Activated naive CD4-positive, alpha-beta T cell treated with anti-CD3 and anti-CD28 coated beads for 36 hours (primary cell): ENCODE measurements at regions of chr10 and their contacts with region 1.

Region 1: DNA sequence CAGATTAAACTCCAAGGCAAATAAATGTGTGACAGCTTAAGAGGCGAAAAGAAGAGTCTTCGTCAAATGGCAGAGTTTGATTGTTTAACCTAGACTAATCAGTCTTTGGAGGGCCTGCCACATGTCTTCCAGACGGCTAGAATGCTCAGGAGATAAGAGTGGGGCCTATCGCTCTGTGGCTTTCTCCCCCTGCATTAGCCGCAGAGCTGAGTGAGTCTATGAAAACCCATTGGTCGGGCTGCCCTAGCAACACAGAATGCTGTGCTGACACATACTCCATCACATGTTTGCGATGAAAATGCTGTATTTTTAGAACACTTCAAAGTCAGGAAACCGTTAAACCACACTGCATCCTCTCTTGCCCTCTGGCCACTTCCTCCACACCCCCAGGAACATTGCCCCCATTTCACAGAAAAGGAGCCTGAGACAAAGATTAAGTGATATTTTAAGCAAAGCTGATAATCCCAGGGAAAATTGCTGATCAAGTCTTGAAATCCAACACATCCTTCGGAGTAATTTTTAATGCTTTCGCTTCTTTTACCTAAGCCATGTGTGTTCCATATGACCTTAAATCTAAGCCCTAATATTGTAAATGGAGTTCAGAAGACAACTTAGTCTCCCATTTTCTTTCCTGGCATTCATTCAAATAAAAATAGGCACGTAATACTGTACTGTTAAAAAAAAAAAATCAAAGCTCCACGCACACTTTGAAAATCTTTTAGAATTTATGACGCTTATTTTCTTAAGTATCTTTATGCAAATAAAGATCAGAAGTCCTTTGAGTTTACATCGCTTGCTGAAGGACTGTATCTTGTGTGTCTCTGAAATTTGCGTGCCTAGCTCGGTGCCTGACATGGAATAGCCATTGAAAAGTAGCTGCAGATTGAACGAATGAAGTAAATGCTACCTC is 161.2 kb downstream of the CELF2 start:
- DNase-seq: peak; percentile 90
- H3K4me3 Mint-ChIP-seq: peak overlapping the region; percentile 82
- H3K27ac Mint-ChIP-seq: no peak overlapping the region
- H3K4me1 Mint-ChIP-seq: peaks cover 88% of the 10 kb centered on the region
- H3K27me3 Mint-ChIP-seq: no peaks in the 10 kb centered on the region

Region 2: GRCh38 chr10:10930979-10931743 is 247.7 kb before region 1 on chr10:
- CTCF ChIA-PET with region 1: no interaction called
- intact Hi-C with region 1: no loop called
- DNase-seq: no peak
- H3K4me3 Mint-ChIP-seq: no peak overlapping the region
- H3K27ac Mint-ChIP-seq: no peak overlapping the region
- H3K4me1 Mint-ChIP-seq: no peaks in the 10 kb centered on the region
- H3K27me3 Mint-ChIP-seq: no peaks in the 10 kb centered on the region

Region 3: GRCh38 chr10:11113156-11113555 is 65.7 kb before region 1 on chr10:
- CTCF ChIA-PET with region 1: interaction called, 7 read pairs
- intact Hi-C with region 1: loop called (anchors 1 kb)
- DNase-seq: peak; percentile 41
- H3K4me3 Mint-ChIP-seq: no peak overlapping the region
- H3K27ac Mint-ChIP-seq: no peak overlapping the region
- H3K4me1 Mint-ChIP-seq: peaks cover 21% of the 10 kb centered on the region
- H3K27me3 Mint-ChIP-seq: no peaks in the 10 kb centered on the region

Region 4: DNA sequence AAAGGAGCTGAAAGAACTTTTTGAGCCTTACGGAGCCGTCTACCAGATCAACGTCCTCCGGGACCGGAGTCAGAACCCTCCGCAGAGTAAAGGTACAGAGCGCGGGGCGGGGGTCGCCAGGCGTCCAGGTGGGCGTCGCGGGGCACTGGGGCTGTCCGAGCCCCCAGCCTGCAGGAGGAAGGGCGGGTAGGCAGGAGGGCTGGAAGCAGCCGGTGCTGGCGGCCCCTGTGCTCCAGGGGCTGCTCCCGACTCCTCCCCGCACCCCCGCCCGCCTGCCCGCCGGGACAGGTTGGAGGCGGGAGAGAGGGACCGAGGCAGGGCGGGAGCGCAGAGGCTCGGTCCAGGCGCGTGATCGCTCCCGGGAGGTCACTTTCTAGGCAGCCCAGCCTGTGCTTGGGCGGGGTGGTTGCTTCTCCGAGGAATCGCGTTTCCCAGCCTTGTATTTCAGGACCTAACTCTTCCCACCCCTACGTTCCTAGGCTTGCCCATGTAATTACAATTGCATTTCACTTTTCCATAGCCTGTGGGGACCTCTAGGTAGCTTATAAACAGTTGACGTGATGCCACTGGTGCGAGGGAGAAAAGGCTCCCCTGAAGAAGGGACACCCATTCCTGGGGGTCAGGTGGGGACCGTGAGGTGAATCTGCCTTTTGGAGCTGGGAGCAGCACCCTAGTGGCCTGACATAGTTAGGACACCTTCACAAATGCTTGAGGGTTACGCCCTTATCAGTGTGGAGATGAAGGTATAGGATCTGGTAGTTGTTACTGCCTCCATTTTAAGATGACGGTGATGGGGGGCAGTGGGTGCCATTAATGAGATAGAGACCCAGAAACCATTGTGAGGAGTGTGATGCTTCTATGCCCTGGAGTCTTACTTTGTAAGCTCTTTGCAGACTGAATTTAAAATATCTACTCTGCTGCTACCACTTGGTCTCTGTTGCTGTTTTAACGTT is 13.0 kb before region 1 on chr10:
- CTCF ChIA-PET with region 1: interaction called, 11 read pairs
- intact Hi-C with region 1: loop called (anchors 1 kb)
- DNase-seq: peak; percentile 84
- H3K4me3 Mint-ChIP-seq: no peak overlapping the region
- H3K27ac Mint-ChIP-seq: no peak overlapping the region
- H3K4me1 Mint-ChIP-seq: peaks cover 26% of the 10 kb centered on the region
- H3K27me3 Mint-ChIP-seq: no peaks in the 10 kb centered on the region

Region 5: DNA sequence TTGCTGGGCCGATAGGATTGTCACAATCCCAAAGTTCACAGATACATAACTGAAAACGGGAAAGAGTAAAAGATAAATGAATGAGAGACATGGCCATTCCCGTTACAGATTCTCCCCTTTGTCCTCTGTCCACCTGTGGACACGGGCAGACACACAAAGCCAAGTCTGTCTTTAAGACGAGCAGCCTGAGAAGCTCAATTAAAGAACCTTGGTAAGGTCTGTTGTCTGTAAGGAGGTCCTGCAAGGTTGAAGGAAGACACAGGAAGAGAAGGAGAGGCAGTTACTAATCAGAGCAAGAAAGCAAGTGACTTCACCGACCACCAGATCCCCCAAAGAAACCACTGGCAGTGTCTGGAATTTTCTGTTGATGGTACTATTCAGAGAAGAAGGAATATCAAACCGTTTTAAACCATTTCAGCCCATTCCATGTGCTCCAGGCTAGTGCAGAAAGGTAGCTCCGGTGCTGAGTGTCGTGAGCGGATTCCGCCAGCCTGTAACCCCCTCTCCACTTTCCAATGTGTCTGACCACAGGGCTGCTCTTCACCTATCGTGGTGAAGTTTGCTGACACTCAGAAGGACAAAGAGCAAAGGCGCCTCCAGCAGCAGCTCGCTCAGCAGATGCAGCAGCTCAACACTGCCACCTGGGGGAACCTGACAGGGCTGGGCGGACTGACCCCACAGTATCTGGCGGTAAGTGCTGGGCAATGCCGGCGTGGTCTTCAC is 91.4 kb after region 1 on chr10:
- CTCF ChIA-PET with region 1: interaction called, 13 read pairs
- intact Hi-C with region 1: loop called (anchors 1 kb)
- DNase-seq: peak; percentile 85
- H3K4me3 Mint-ChIP-seq: no peak overlapping the region
- H3K27ac Mint-ChIP-seq: peak overlapping the region; percentile 52
- H3K4me1 Mint-ChIP-seq: peaks cover 77% of the 10 kb centered on the region
- H3K27me3 Mint-ChIP-seq: no peaks in the 10 kb centered on the region

Region 6: DNA sequence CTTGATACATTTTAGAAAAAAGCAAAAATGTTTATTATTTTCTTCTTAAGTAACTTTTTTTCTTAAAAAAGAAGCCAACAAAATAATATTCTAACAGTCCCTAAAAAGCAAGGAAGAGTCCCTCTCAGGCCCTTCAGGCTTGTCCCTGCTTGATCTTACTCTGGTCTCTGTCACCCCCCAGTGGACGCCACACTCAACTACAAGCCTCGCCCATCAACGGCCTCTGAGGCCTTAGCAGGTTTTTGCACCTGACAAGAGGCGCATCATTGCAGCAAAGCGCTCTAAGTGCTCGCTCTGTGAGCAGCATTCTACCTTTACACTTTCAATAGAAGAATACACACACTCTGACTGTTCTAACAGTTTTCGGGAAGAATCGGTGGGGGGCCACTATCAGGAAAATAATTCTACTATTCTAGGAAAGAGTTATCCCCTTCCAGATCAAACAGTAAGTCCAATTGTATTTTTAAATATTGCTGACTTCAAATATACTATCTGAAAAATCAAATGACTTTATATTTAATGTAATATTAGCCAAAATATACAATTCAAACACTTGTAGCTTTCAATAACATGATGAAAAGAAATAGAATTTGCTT is 293.4 kb after region 1 on chr10:
- CTCF ChIA-PET with region 1: no interaction called
- intact Hi-C with region 1: loop called (anchors 2 kb)
- DNase-seq: peak; percentile 85
- H3K4me3 Mint-ChIP-seq: no peak overlapping the region
- H3K27ac Mint-ChIP-seq: no peak overlapping the region
- H3K4me1 Mint-ChIP-seq: no peaks in the 10 kb centered on the region
- H3K27me3 Mint-ChIP-seq: no peaks in the 10 kb centered on the region

Region 7: DNA sequence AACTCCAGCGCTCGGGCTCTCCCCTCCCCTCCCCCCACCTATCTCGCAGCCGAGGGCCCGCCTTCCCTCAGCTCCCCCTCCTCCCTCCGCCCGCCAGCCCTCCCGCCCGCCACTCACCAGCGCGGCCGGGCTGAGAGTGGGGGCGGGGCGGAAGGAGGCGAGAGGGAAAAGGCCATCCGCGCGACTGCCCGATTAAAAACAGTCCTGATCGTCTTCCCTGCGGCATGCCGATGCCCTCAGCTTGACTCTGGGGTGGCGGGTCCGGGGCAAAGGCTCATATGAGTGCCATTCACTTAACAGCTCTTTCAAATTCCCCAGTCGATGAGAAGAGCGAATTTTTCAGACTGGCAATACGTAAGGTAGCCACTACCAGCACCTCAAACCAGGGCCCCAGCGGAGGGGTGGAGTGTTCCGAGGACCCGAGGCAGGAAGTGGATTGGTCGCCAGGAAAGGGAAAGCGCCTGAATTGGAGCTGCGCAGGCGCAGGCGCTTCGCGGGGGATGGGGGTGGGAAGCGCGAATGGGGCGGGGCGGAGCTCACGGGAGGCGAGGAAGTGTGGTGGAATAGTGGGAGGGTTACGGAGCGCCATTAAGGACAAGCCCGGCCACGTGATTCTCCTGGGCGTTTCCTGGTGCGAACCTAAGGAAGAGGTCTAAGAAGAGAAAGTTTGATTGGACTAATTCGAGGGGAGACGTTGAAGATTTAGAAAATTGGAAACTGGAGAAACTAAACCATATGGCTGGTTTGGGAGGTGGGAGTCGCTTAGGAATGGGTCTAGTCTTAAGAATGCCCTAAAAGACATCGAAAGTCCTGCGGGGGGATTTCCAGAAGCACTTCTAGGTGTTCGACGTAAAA is 864.2 kb after region 1 on chr10 and contains the start of gene UPF2:
- CTCF ChIA-PET with region 1: no interaction called
- intact Hi-C with region 1: loop called (anchors 10 kb)
- DNase-seq: peak; percentile 98
- H3K4me3 Mint-ChIP-seq: peak within 1 kb of the TSS; percentile 98
- H3K27ac Mint-ChIP-seq: peak within 1 kb of the TSS; percentile 99
- H3K4me1 Mint-ChIP-seq: peaks cover 33% of the 10 kb centered on the region
- H3K27me3 Mint-ChIP-seq: no peaks in the 10 kb centered on the region
- total RNA-seq, gene UPF2: 27.5 to 29.5 TPM